ENCODE measurements at regions of chr1 and their contacts with region 1.

Region 1: GRCh38 chr1:150293433-150294168 is at the start of gene MRPS21:
- DNase-seq: peak; percentile 93
- ATAC-seq: peak; percentile 99
- H3K4me3 Mint-ChIP-seq: peak within 1 kb of the TSS; percentile 95
- H3K27ac Mint-ChIP-seq: peak within 1 kb of the TSS; percentile 92
- H3K4me1 Mint-ChIP-seq: peaks cover 34% of the 10 kb centered on the region
- H3K27me3 Mint-ChIP-seq: no peaks in the 10 kb centered on the region
- total RNA-seq, gene MRPS21: 86.4 to 111 TPM

Region 2: DNA sequence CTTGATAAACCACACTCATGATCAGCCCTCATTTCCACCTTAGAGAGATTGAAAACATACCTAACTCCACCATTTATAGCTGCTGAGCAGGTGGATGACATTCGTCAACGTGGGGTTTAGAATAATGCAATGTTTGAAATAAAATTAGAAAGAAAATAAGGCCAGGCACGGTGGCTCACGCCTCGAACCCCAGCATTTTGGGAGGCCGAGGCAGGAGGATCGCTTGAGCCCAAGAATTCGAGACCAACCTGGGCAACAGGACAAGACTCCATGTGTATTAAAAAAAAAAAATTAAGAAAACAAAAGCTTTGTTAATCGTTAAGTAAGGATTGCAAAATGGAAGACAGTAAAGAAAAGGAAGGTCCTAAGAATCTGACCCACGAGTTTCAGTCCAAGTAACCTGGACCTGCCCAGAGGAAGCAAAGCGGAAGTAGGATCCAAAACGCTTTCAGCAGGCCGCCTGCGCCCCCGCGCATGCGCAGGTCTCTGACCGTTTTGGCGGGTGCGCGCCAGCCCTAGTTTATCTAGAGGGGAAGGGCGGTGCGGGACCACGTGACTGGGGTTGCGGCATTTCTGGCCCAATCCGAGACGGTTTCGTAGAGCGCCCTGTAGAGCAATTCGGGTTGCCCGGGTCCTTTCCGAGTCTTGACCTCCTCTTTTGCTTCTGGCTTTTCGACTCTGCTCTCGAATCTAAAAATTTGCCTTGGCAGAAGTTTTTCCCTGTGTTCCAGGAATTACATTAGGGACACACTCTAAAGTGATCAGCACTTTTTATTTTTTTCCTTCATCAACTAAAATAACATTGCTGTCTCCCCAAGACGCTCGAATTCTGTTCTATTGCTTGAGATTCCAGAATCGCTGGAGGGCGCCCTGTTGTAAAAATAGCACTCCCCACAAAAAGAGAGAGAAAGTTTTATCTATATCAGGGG is 80.2 kb before region 1 on chr1:
- CTCF ChIA-PET with region 1: no interaction called
- POLR2A ChIA-PET with region 1: interaction called, 6 read pairs
- intact Hi-C with region 1: loop called in 1 of 2 experiments (anchors 1 kb)
- DNase-seq: peak; percentile 96
- ATAC-seq: peak; percentile 100
- H3K4me3 Mint-ChIP-seq: peak overlapping the region; percentile 73
- H3K27ac Mint-ChIP-seq: peak overlapping the region; percentile 96
- H3K4me1 Mint-ChIP-seq: peaks cover 19% of the 10 kb centered on the region
- H3K27me3 Mint-ChIP-seq: no peaks in the 10 kb centered on the region

Region 3: DNA sequence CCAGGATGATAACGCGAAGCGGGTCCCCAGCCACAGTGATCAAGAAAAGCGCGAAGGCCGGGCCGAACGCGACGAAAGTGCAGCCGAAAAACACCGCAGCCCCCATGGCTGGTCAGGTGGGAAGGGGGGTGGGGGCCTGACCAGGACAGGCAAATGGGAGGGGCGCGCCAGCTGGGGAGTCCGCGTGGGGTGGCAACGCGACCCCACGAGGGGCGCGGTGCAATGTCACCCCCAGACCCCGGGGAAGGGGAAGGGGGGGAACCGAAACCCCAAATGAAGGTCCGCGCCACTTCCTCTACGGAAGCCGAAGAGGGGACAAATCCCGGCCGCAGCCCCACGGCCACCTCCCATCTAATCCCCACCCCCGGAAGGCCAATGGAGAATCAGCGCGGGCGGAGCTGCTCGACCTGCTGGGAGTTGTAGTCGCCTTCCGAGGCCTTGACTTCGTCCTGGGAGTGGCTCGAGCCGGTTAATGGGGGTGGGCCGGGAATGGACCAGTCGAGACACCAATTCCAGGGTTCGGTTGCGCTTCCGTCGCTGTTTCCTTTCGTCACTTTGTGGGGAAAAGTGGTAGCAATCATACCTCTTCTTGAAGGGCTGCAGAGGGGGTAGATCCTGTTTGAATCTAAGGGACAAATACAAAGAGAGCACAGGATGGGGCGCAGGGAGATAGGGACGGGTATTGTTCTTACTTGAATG is 24.7 kb before region 1 on chr1 and contains the start of gene APH1A:
- CTCF ChIA-PET with region 1: no interaction called
- POLR2A ChIA-PET with region 1: no interaction called
- intact Hi-C with region 1: loop called in 1 of 2 experiments (anchors 1 kb)
- DNase-seq: peak; percentile 97
- ATAC-seq: peak; percentile 99
- H3K4me3 Mint-ChIP-seq: peak within 1 kb of the TSS; percentile 89
- H3K27ac Mint-ChIP-seq: peak within 1 kb of the TSS; percentile 98
- H3K4me1 Mint-ChIP-seq: peaks cover 25% of the 10 kb centered on the region
- H3K27me3 Mint-ChIP-seq: no peaks in the 10 kb centered on the region
- total RNA-seq, gene APH1A: 62.4 to 89.3 TPM

Region 4: GRCh38 chr1:150281837-150282653 is 11.6 kb before region 1 on chr1 and contains the start of gene CIART:
- CTCF ChIA-PET with region 1: interaction called, 4 read pairs
- POLR2A ChIA-PET with region 1: no interaction called
- intact Hi-C with region 1: loop called in 1 of 2 experiments (anchors 1 kb)
- DNase-seq: peak; percentile 89
- ATAC-seq: peak; percentile 96
- H3K4me3 Mint-ChIP-seq: peak within 1 kb of the TSS; percentile 77
- H3K27ac Mint-ChIP-seq: peak within 1 kb of the TSS; percentile 92
- H3K4me1 Mint-ChIP-seq: peaks cover 29% of the 10 kb centered on the region
- H3K27me3 Mint-ChIP-seq: no peaks in the 10 kb centered on the region
- total RNA-seq, gene CIART: 5.9 to 6.0 TPM

Measured in activated CD4-positive, alpha-beta T cell treated with anti-CD3 and anti-CD28 coated beads for 36 hours (primary cell).